Psoas muscle (tissue), 8 donors: ENCODE measurements at regions of chr17 and their contacts with region 1.

Region 1: GRCh38 chr17:58587702-58588254 is 73.3 kb upstream of the MTMR4 start:
- DNase-seq: peak; percentile 20 to 52
- ATAC-seq: peak; percentile 37 to 77 (median 50)
- H3K4me3 ChIP-seq: no peak overlapping the region
- H3K27ac ChIP-seq: no peak overlapping the region
- H3K4me1 ChIP-seq: no peaks in the 10 kb centered on the region
- H3K27me3 ChIP-seq: no peaks in the 10 kb centered on the region
- CTCF ChIP-seq: peak; percentile 77

Region 2: GRCh38 chr17:58643140-58643539 is 55.4 kb after region 1 on chr17:
- intact Hi-C with region 1: loop called in 1 of 2 experiments (anchors 10 kb)
- DNase-seq: no peak
- ATAC-seq: no peak
- H3K4me3 ChIP-seq: no peak overlapping the region
- H3K27ac ChIP-seq: no peak overlapping the region
- H3K4me1 ChIP-seq: no peaks in the 10 kb centered on the region
- H3K27me3 ChIP-seq: no peaks in the 10 kb centered on the region
- CTCF ChIP-seq: no peak

Region 3: GRCh38 chr17:59004338-59005111 is 416.7 kb after region 1 on chr17:
- intact Hi-C with region 1: loop called in 1 of 2 experiments (anchors 2 kb)
- DNase-seq: peak in 1 of 2 donors; percentile 24
- ATAC-seq: peak; percentile 70 to 92 (median 75)
- H3K4me3 ChIP-seq: no peak overlapping the region
- H3K27ac ChIP-seq: no peak overlapping the region
- H3K4me1 ChIP-seq: no peaks in the 10 kb centered on the region
- H3K27me3 ChIP-seq: no peaks in the 10 kb centered on the region
- CTCF ChIP-seq: peak; percentile 95